ENCODE measurements at regions of chr1 and their contacts with region 1.

Region 1: GRCh38 chr1:88595355-88596002 is 88.6 kb upstream of the PKN2 start:
- DNase-seq: peak in 2 of 9 experiments; percentile 35 to 48
- ATAC-seq: peak; percentile 66
- H3K4me3 ChIP-seq: no peak overlapping the region
- H3K4me3 Mint-ChIP-seq: no peak overlapping the region
- H3K27ac ChIP-seq: no peak overlapping the region
- H3K27ac Mint-ChIP-seq: no peak overlapping the region
- H3K4me1 ChIP-seq: no peaks in the 10 kb centered on the region
- H3K4me1 Mint-ChIP-seq: no peaks in the 10 kb centered on the region
- H3K27me3 ChIP-seq: peaks cover 0 to 2% of the 10 kb centered on the region in 2 experiments
- H3K27me3 Mint-ChIP-seq: no peaks in the 10 kb centered on the region
- CTCF ChIP-seq: peak; percentile 50

Region 2: GRCh38 chr1:87131809-87132283 is 1463.6 kb before region 1 on chr1:
- CTCF ChIA-PET with region 1: no interaction called
- POLR2A ChIA-PET with region 1: no interaction called
- intact Hi-C with region 1: loop called in 1 of 2 experiments (anchors 2 kb)
- DNase-seq: peak; percentile 43 to 83 (median 75)
- ATAC-seq: peak; percentile 90
- H3K4me3 ChIP-seq: peak overlapping the region; percentile 50 to 85
- H3K4me3 Mint-ChIP-seq: peak overlapping the region; percentile 88
- H3K27ac ChIP-seq: no peak overlapping the region
- H3K27ac Mint-ChIP-seq: no peak overlapping the region
- H3K4me1 ChIP-seq: peaks cover 7% of the 10 kb centered on the region
- H3K4me1 Mint-ChIP-seq: peaks cover 12% of the 10 kb centered on the region
- H3K27me3 ChIP-seq: peaks cover 4 to 6% of the 10 kb centered on the region in 2 experiments
- H3K27me3 Mint-ChIP-seq: peaks cover 39% of the 10 kb centered on the region
- CTCF ChIP-seq: peak; percentile 91

Region 3: GRCh38 chr1:87292684-87293493 is 1302.6 kb before region 1 on chr1:
- CTCF ChIA-PET with region 1: no interaction called
- POLR2A ChIA-PET with region 1: no interaction called
- intact Hi-C with region 1: loop called in 1 of 2 experiments (anchors 1 kb)
- DNase-seq: peak; percentile 24 to 77 (median 67)
- ATAC-seq: no peak
- H3K4me3 ChIP-seq: no peak overlapping the region
- H3K4me3 Mint-ChIP-seq: no peak overlapping the region
- H3K27ac ChIP-seq: no peak overlapping the region
- H3K27ac Mint-ChIP-seq: no peak overlapping the region
- H3K4me1 ChIP-seq: no peaks in the 10 kb centered on the region
- H3K4me1 Mint-ChIP-seq: no peaks in the 10 kb centered on the region
- H3K27me3 ChIP-seq: no peaks in the 10 kb centered on the region
- H3K27me3 Mint-ChIP-seq: peaks cover 6% of the 10 kb centered on the region
- CTCF ChIP-seq: peak; percentile 86

Region 4: GRCh38 chr1:88175631-88176226 is 419.8 kb before region 1 on chr1:
- CTCF ChIA-PET with region 1: no interaction called
- POLR2A ChIA-PET with region 1: no interaction called
- intact Hi-C with region 1: loop called in 1 of 2 experiments (anchors 5 kb)
- DNase-seq: no peak
- ATAC-seq: no peak
- H3K4me3 ChIP-seq: no peak overlapping the region
- H3K4me3 Mint-ChIP-seq: no peak overlapping the region
- H3K27ac ChIP-seq: no peak overlapping the region
- H3K27ac Mint-ChIP-seq: no peak overlapping the region
- H3K4me1 ChIP-seq: no peaks in the 10 kb centered on the region
- H3K4me1 Mint-ChIP-seq: no peaks in the 10 kb centered on the region
- H3K27me3 ChIP-seq: no peaks in the 10 kb centered on the region
- H3K27me3 Mint-ChIP-seq: peaks cover 10% of the 10 kb centered on the region
- CTCF ChIP-seq: no peak

Measured in CD8-positive, alpha-beta T cell (primary cell).